Psoas muscle (tissue), 8 donors: ENCODE measurements at regions of chr15 and their contacts with region 1.

Region 1: DNA sequence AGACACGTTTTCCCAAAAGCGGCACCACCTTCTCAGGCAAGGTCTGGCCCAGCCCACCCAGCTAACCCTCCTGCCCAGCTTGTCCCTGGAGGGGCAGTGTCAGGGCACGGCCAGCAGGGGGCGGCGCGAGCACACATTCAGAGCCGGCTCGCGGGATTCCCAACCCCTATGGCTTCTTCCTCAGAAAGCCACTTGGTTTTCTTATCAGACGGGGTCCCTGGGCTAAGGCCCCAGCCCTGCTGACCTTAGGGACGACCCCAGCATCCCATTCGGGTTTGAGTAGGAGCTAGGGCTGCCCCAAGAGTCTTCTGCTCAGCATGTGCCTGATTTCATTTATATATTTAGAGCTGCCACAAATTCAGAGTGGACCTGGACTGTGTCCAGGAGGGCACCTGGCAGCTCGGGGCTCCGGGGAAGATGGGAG is 14.5 kb downstream of the RLBP1 start:
- DNase-seq: peak; percentile 72 to 81
- ATAC-seq: peak; percentile 77 to 82 (median 78)
- H3K4me3 ChIP-seq: peak overlapping the region; percentile 32
- H3K27ac ChIP-seq: no peak overlapping the region
- H3K4me1 ChIP-seq: peaks cover 4% of the 10 kb centered on the region
- H3K27me3 ChIP-seq: no peaks in the 10 kb centered on the region
- CTCF ChIP-seq: peak; percentile 93

Region 2: GRCh38 chr15:89057504-89058133 is 149.3 kb before region 1 on chr15:
- intact Hi-C with region 1: no loop called
- DNase-seq: peak; percentile 81 to 89
- ATAC-seq: peak; percentile 91 to 98 (median 93)
- H3K4me3 ChIP-seq: no peak overlapping the region
- H3K27ac ChIP-seq: no peak overlapping the region
- H3K4me1 ChIP-seq: peaks cover 2% of the 10 kb centered on the region
- H3K27me3 ChIP-seq: no peaks in the 10 kb centered on the region
- CTCF ChIP-seq: peak; percentile 99

Region 3: DNA sequence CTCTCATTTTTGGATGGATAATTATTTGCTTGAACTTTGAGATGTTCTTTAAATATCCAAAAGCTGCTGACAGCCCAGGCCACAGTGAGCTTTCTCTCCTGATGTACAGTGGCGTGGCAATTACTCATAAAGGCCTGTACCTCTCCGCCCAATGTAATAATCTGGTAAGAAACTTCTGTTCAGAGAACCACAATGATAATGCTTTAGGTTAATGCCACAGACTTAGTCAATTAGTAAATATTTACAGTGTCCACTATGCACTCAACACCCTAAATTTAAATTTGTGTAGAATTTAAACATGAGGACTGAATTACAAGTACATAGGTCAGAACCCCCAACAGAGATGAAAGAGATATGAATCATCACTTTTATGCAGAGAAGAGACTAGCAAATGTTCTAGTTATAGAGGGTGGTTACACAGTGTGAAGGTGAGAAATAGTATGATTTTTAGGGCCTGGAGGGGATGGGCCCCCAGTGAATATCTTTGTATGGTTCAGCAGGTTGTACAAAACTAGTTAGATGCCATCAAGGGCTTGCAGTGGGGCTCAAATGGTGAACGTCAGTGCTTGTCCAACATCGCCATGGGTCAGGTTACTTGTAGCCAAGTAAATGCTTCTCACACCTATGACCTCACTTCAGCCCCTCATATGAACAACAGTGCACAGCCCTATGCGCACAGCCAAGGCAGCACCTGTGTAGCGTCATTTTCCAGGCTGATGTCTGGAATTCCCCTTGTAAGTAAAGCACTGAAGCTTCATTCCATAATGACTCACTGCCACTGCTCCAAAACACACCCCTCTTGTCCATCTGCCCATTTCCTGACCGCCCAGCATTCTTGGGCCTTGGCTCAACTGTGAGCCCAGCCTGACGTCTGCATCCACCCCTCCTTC is 105.4 kb before region 1 on chr15:
- intact Hi-C with region 1: no loop called
- DNase-seq: peak; percentile 79 to 87
- ATAC-seq: peak; percentile 77 to 92 (median 84)
- H3K4me3 ChIP-seq: no peak overlapping the region
- H3K27ac ChIP-seq: peak overlapping the region; percentile 87
- H3K4me1 ChIP-seq: peaks cover 88% of the 10 kb centered on the region
- H3K27me3 ChIP-seq: no peaks in the 10 kb centered on the region
- CTCF ChIP-seq: no peak

Region 4: GRCh38 chr15:89299896-89300295 is 93.0 kb after region 1 on chr15:
- intact Hi-C with region 1: loop called (anchors 5 kb)
- DNase-seq: no peak
- ATAC-seq: no peak
- H3K4me3 ChIP-seq: no peak overlapping the region
- H3K27ac ChIP-seq: no peak overlapping the region
- H3K4me1 ChIP-seq: no peaks in the 10 kb centered on the region
- H3K27me3 ChIP-seq: no peaks in the 10 kb centered on the region
- CTCF ChIP-seq: peak; percentile 39

Region 5: GRCh38 chr15:89332446-89332845 is 125.5 kb after region 1 on chr15:
- intact Hi-C with region 1: no loop called
- DNase-seq: no peak
- ATAC-seq: no peak
- H3K4me3 ChIP-seq: peak overlapping the region; percentile 12
- H3K27ac ChIP-seq: no peak overlapping the region
- H3K4me1 ChIP-seq: peaks cover 43% of the 10 kb centered on the region
- H3K27me3 ChIP-seq: no peaks in the 10 kb centered on the region
- CTCF ChIP-seq: no peak

Region 6: GRCh38 chr15:89430530-89431341 is 223.8 kb after region 1 on chr15:
- intact Hi-C with region 1: loop called (anchors 5 to 10 kb)
- DNase-seq: peak; percentile 84 to 92
- ATAC-seq: peak; percentile 93 to 99 (median 98)
- H3K4me3 ChIP-seq: peak overlapping the region; percentile 65
- H3K27ac ChIP-seq: no peak overlapping the region
- H3K4me1 ChIP-seq: peaks cover 8% of the 10 kb centered on the region
- H3K27me3 ChIP-seq: peaks cover 0 to 7% (median 2%) of the 10 kb centered on the region in 3 donors
- CTCF ChIP-seq: peak; percentile 98

Region 7: GRCh38 chr15:89646416-89647092 is 439.6 kb after region 1 on chr15:
- intact Hi-C with region 1: no loop called
- DNase-seq: no peak
- ATAC-seq: peak in 2 of 4 donors; percentile 8 to 10
- H3K4me3 ChIP-seq: no peak overlapping the region
- H3K27ac ChIP-seq: no peak overlapping the region
- H3K4me1 ChIP-seq: no peaks in the 10 kb centered on the region
- H3K27me3 ChIP-seq: no peaks in the 10 kb centered on the region
- CTCF ChIP-seq: no peak